OCI-LY7 (cell line): ENCODE measurements at regions of chr16 and their contacts with region 1.

Region 1: GRCh38 chr16:74862741-74863244 is 88.2 kb upstream of the FA2H start:
- DNase-seq: peak; percentile 69
- H3K4me3 ChIP-seq: no peak overlapping the region
- H3K27ac ChIP-seq: no peak overlapping the region
- H3K4me1 ChIP-seq: peaks cover 11% of the 10 kb centered on the region
- CTCF ChIP-seq: peak; percentile 99

Region 2: DNA sequence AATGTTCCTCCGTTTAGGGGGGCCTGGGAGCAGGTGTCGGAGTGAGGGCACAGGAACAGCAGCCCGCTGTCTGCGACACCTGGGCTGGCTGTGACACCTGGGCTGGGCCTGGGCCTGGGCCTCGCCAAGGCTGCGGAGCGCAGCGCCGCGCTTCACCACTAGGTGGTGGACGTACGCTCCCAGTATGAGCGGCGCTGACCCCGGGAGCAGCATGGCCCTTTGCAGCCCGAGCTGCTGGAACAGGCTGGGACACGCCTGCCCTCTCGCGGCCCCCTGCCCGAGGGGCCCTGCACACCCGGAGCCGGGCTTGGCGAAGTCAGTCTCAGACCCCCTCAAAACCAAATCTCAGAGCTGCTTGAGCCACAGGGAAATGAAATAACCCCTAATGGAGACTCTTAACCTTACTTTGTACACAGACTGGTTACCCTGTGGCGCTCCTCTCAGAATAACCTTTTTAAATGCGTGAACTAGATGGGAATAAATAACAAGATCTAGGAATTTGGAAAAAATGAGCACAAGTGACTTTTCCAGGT is 49.6 kb before region 1 on chr16:
- CTCF ChIA-PET with region 1: interaction called, 12 read pairs
- POLR2A ChIA-PET with region 1: interaction called, 3 read pairs
- intact Hi-C with region 1: loop called (anchors 1 kb)
- DNase-seq: peak; percentile 80
- H3K4me3 ChIP-seq: no peak overlapping the region
- H3K27ac ChIP-seq: no peak overlapping the region
- H3K4me1 ChIP-seq: peaks cover 5% of the 10 kb centered on the region
- CTCF ChIP-seq: peak; percentile 94

Region 3: DNA sequence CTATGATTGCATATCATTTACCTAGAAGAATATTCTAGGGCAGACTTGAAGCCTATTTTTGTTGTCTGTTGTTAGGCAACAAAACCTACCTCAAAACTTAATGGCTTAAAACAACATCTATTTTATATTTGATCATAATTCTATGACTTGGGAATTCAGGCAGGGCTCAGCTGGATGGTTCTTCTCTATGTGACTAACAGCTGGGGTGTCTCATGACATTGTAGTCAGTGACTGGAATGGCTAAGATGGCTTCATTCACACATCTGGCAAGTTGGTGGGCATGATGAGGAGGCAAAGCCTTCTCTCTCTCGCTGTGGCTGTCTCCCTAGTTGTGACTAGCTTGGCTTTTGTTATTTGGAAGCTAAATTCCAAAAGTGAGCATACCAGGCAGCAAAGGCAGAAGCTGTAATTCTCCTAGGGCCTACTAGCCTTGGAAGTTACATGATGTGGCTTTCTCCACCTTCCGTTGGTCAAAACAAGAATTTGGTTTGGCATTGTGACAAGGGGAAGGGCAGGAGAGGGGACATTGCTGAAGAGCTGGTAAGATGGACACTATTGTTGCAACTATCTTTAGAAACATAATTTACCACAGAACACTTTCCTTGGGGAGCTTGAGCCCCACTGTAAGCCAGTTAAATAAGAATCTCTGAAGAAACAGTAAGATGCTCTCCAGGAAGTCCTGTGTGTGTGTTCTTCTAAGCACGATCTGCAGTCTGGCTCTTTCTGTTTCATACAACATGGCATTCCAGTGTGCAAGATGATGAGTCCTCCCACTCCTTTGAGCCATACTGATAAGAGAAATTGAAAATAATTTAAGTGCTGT is 175.5 kb after region 1 on chr16:
- CTCF ChIA-PET with region 1: no interaction called
- POLR2A ChIA-PET with region 1: no interaction called
- intact Hi-C with region 1: no loop called
- DNase-seq: no peak
- H3K4me3 ChIP-seq: no peak overlapping the region
- H3K27ac ChIP-seq: no peak overlapping the region
- H3K4me1 ChIP-seq: no peaks in the 10 kb centered on the region
- CTCF ChIP-seq: no peak